Activated CD8-positive, alpha-beta T cell treated with anti-CD3 and anti-CD28 coated beads for 36 hours (primary cell): ENCODE measurements at regions of chr4 and their contacts with region 1.

Region 1: GRCh38 chr4:185189606-185190305 is 14.0 kb downstream of the CFAP97 start:
- DNase-seq: no peak
- ATAC-seq: no peak
- H3K4me3 Mint-ChIP-seq: no peak overlapping the region
- H3K27ac Mint-ChIP-seq: no peak overlapping the region
- H3K4me1 Mint-ChIP-seq: peaks cover 34% of the 10 kb centered on the region
- H3K27me3 Mint-ChIP-seq: no peaks in the 10 kb centered on the region
- CTCF ChIP-seq: no peak

Region 2: GRCh38 chr4:185149392-185149791 is 40.4 kb before region 1 on chr4:
- CTCF ChIA-PET with region 1: interaction called, 30 read pairs
- POLR2A ChIA-PET with region 1: no interaction called
- intact Hi-C with region 1: loop called (anchors 2 kb)
- DNase-seq: no peak
- ATAC-seq: no peak
- H3K4me3 Mint-ChIP-seq: no peak overlapping the region
- H3K27ac Mint-ChIP-seq: no peak overlapping the region
- H3K4me1 Mint-ChIP-seq: no peaks in the 10 kb centered on the region
- H3K27me3 Mint-ChIP-seq: no peaks in the 10 kb centered on the region
- CTCF ChIP-seq: no peak